ENCODE measurements at regions of chr2 and their contacts with region 1.

Region 1: DNA sequence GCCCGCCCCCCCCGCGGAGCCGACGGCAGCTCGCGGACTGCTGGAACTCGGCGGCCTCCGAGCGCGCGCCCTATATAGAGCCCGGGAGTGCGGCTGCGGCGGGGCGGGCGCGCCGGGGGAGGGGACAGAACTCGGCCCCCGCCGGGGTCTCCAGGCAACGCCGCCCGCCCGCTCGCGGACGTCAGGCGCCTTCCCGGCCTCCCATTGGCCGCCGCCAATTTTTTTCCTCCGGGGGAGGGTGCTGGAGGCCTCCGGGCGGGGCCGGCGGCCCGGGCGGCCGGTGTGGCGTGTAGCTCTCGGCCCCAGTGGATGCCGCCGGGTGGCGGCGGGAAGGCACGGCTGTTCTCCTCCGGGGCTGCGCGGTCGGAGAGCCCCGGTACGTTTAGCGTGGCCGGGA is at the start of gene ZFP36L2:
- DNase-seq: peak; percentile 98
- ATAC-seq: peak; percentile 89
- H3K4me3 ChIP-seq: peak within 1 kb of the TSS; percentile 74 to 96
- H3K27ac ChIP-seq: peak within 1 kb of the TSS; percentile 71 to 94
- H3K4me1 ChIP-seq: no peaks in the 10 kb centered on the region
- H3K27me3 ChIP-seq: no peaks in the 10 kb centered on the region
- total RNA-seq, gene ZFP36L2: 180 to 231 TPM

Region 2: GRCh38 chr2:42859006-42859552 is 367.5 kb before region 1 on chr2:
- intact Hi-C with region 1: loop called (anchors 5 to 10 kb)
- DNase-seq: no peak
- ATAC-seq: no peak
- H3K4me3 ChIP-seq: no peak overlapping the region
- H3K27ac ChIP-seq: no peak overlapping the region
- H3K4me1 ChIP-seq: no peaks in the 10 kb centered on the region
- H3K27me3 ChIP-seq: no peaks in the 10 kb centered on the region

Region 3: DNA sequence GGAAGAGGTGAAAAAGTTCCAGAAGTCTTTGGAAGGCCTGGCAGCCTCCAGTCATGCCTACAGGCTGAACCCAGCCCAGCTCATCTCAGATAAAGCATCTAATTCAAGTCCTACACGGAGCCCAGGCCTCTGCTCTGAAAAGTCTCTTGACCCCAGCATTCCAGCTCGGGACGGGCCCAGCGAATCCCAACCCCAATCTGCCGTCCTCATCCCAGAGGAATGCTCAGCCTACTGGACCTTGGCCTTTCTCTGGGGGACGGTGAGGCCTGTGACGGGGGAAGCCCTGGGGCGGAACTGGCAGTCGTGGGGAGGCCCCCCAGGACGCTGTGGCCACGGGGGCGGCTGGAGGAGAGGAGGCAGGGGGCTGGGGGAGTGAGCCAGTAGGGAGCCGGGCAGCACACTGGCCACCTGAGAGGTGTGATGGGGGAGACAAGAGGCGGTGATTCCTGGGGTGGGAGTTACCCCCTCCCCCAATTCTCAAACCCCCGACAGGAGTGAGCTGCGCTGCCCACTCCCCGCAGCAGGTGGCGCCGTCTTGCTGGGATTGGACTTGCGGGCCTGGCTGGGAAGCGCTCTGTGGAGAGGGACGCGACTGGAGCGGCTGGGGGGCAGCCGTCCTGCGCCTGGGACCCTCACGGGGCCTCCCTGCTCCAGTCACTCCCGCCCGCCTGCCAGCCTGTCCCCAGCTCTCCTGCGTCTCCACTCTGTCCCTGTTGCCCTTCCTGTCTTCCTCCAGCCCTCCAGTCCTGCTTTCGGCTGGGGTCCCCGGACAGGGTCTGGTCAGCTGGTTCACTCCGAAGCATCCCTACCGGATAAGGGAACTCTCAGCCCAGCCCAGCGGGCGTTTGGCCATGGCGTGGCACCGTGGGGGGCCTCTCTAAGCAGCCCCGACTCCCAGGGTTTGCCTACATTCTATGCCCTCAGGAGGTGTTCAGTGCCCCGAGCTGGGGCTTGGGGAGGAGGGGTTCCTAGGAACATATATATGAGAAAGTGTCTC is 251.5 kb before region 1 on chr2:
- intact Hi-C with region 1: loop called (anchors 2 kb)
- DNase-seq: peak; percentile 90 to 93
- ATAC-seq: peak; percentile 93
- H3K4me3 ChIP-seq: peak overlapping the region in 1 of 2 donors; percentile 53
- H3K27ac ChIP-seq: no peak overlapping the region
- H3K4me1 ChIP-seq: no peaks in the 10 kb centered on the region
- H3K27me3 ChIP-seq: no peaks in the 10 kb centered on the region

Region 4: DNA sequence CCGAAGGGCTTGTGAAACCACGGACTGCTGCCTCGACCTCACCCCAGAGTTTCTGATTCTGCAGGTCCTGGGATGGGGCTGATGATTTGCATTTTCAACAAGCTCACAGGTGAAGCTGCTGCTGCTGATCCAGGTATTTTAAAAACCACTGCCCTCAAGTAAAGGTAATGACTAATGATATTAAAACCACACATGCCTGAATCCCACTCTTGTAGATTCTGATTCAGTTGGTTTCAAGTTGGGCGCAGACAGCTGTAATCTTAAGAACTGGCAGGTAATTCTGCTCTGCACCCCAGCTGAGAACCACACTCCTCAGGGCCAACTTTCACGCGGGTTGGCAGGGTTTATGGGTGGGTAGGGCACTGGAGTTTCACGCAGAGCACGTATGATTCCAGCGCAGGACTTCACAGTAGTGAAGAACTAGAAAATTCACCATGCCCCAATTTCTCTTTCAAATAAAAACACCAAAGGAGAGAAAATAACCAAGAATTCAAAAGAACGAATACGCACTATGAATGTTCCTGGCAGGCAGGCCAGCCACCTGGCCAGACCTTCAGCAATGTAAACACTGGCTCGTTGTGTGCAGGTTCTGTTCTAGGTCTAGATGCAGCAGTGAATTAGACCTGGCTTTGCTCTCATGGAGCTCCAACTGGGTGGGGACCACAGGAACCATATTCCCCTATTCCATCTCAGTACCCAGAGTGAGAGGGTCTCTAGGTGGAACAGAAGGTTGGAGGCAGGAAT is 74.5 kb after region 1 on chr2:
- intact Hi-C with region 1: loop called in 1 of 2 experiments (anchors 5 kb)
- DNase-seq: no peak
- ATAC-seq: no peak
- H3K4me3 ChIP-seq: no peak overlapping the region
- H3K27ac ChIP-seq: peak overlapping the region; percentile 44 to 93
- H3K4me1 ChIP-seq: peaks cover 7 to 19% of the 10 kb centered on the region in 2 donors
- H3K27me3 ChIP-seq: no peaks in the 10 kb centered on the region